Activated CD4-positive, alpha-beta T cell treated with anti-CD3 and anti-CD28 coated beads, Interleukin-2, amount 10 ng/mL, durations not matched to agents 24 days and 14 days (primary cell): ENCODE measurements at regions of chr15 and their contacts with region 1.

Region 1: GRCh38 chr15:35078221-35078915 is 6.7 kb downstream of the NANOGP8 start:
- DNase-seq: peak; percentile 77
- H3K4me3 Mint-ChIP-seq: no peak overlapping the region
- H3K27ac Mint-ChIP-seq: no peak overlapping the region
- H3K4me1 Mint-ChIP-seq: no peaks in the 10 kb centered on the region
- H3K27me3 Mint-ChIP-seq: peaks cover 2% of the 10 kb centered on the region

Region 2: DNA sequence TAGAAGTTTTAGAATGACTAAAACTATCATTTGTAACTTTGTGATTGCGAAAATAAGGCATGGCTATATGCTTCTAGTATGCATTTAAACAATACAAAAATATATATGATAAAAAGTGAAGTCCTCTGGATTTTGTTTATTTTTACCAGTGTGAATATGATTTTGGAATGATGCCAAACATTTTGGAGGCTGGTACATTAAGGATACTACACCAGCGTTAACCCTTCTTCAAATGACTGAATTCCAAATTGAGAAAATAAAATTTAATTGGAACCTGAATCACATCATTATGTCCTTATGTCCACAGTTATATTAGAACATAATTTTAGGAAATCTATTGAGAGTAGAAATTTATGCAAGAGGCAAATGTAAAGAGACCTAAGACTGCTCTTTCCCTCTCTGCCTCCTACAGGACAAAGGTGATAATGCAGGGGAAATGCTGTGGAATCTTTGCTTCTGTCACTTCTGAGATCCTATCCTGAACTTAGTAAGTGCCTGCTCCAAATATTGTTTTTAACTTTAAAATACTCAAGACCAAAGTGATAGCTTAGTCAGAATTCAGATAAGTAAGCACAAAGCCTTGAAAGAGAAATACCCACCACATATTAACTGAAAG is 127.8 kb after region 1 on chr15:
- intact Hi-C with region 1: loop called (anchors 1 kb)
- DNase-seq: peak; percentile 57
- H3K4me3 Mint-ChIP-seq: no peak overlapping the region
- H3K27ac Mint-ChIP-seq: no peak overlapping the region
- H3K4me1 Mint-ChIP-seq: no peaks in the 10 kb centered on the region
- H3K27me3 Mint-ChIP-seq: peaks cover 2% of the 10 kb centered on the region

Region 3: GRCh38 chr15:35444557-35445204 is 366.3 kb after region 1 on chr15:
- intact Hi-C with region 1: loop called (anchors 10 kb)
- DNase-seq: no peak
- H3K4me3 Mint-ChIP-seq: no peak overlapping the region
- H3K27ac Mint-ChIP-seq: no peak overlapping the region
- H3K4me1 Mint-ChIP-seq: no peaks in the 10 kb centered on the region
- H3K27me3 Mint-ChIP-seq: no peaks in the 10 kb centered on the region